HEK293 (cell line): ENCODE measurements at regions of chr1 and their contacts with region 1.

Region 1: GRCh38 chr1:147242439-147243227 is at the start of gene CHD1L:
- H3K4me3 ChIP-seq: peak within 1 kb of the TSS; percentile 99
- H3K27ac ChIP-seq: peak within 1 kb of the TSS; percentile 96
- H3K4me1 ChIP-seq: peaks cover 6% of the 10 kb centered on the region
- CTCF ChIP-seq: peak; percentile 99

Region 2: DNA sequence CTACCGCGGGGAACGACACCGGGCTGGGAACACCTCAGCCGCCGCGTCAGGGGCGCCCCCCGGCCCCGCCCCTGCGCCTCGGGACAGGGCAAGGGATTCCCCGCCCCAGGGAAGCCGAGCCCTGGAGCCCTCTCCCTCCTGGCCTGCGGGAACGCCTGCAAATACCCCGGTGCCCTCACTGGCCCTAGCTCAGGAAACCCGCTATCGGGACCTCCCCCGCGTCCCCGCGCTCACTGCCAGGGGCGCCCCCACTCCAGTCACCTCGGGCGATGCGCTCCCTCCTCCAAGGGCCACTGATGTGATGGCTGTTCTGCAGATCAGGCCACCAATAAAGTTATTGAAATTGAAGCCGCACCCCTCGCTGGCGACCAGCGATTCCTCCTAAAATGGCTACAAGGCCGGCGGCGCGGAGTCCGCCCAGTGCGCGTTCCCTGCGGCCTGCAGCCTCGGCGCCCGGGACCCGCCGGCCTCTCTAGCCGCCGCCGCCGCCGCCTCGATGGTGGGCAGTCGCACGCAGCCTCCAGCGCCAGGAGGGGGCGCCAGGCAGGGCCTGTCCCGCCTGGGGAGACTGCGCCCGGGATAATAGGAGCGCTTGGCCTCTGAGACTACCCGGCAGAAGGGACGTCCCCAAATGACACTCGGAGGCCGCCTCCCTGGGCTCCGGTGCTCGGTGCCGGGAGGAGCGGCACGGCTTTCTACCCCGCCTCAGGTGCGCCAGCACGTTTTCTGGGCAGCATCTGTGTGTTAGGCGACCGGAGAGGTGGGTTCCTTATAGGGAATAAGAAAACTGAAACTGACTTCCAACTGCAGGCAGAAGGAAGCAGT is 70.3 kb before region 1 on chr1 and contains the start of gene PRKAB2:
- CTCF ChIA-PET with region 1: interaction called, 12 read pairs
- POLR2A ChIA-PET with region 1: interaction called, 12 read pairs
- H3K4me3 ChIP-seq: peak within 1 kb of the TSS; percentile 90
- H3K27ac ChIP-seq: peak within 1 kb of the TSS; percentile 71
- H3K4me1 ChIP-seq: peaks cover 19% of the 10 kb centered on the region
- CTCF ChIP-seq: peak; percentile 92

Region 3: GRCh38 chr1:147223740-147224615 is 18.7 kb before region 1 on chr1:
- CTCF ChIA-PET with region 1: interaction called, 11 read pairs
- POLR2A ChIA-PET with region 1: no interaction called
- H3K4me3 ChIP-seq: no peak overlapping the region
- H3K27ac ChIP-seq: no peak overlapping the region
- H3K4me1 ChIP-seq: no peaks in the 10 kb centered on the region
- CTCF ChIP-seq: no peak